Upper lobe of right lung (tissue), 1 donor: ENCODE measurements at regions of chr11 and their contacts with region 1.

Region 1: DNA sequence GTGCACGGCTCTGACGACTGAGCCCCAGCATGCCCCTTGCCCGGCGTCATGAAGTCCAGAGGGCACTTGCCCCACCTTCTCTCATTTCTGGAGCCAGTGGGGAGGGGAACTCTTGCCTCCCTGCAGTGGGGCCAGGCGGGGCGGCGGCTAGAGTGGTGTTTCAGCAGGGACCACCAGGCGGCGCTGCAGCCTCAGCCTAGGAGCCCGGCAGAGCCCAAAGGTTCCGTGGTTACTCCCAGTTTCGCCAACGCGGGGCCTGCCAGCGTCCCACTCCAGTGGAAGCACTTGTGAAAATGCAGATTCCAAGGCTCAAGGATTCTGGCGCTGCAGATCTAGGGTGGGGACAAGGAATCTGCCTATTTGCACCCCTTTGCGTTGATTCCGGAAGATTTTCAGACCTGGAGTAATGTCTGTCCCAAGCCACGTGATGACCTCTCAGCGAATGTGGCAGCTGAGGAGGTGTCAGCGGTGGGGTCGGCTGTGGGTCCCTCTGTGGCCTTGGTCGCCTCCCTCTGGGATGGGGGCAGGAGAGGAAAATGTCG is 55.7 kb downstream of the CD82 start:
- DNase-seq: peak; percentile 87
- ATAC-seq: peak; percentile 85
- H3K4me3 ChIP-seq: no peak overlapping the region
- H3K27ac ChIP-seq: no peak overlapping the region
- H3K4me1 ChIP-seq: peaks cover 15% of the 10 kb centered on the region
- H3K27me3 ChIP-seq: no peaks in the 10 kb centered on the region
- CTCF ChIP-seq: peak; percentile 97

Region 2: GRCh38 chr11:44464741-44465140 is 156.5 kb before region 1 on chr11:
- intact Hi-C with region 1: no loop called
- DNase-seq: no peak
- ATAC-seq: no peak
- H3K4me3 ChIP-seq: no peak overlapping the region
- H3K27ac ChIP-seq: no peak overlapping the region
- H3K4me1 ChIP-seq: no peaks in the 10 kb centered on the region
- H3K27me3 ChIP-seq: no peaks in the 10 kb centered on the region
- CTCF ChIP-seq: no peak

Region 3: DNA sequence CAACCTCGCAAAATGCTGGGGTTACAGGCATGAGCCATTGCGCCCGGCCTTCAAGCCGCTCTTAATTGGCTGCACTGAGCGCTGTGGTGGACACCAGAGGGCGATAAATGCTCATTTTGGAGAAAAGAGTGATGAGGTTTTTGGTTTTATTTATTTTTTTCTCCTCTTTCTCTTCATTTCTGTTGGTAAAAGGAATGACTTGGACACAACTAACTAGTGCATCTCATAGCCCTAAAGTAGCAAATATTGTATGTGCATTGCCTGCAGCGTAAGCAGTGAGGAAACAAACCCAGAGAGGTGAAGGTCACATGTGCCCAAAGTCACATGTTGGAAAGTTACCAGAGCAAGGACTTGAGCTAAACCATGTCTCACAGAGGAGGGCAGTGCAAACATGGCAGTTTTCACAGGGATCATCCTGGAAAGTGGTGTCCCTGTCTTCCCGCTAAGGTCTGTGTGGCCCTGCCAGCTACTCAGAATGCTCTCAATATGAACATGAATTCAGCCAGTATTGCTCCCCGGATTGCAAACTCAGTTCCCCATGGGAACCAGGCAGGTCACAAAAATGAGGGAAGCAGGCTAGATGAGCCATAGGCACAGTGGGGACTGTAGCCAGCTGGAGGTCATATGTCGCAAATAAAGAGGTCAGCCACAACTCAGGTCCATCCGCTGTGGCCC is 64.3 kb before region 1 on chr11:
- intact Hi-C with region 1: loop called (anchors 5 kb)
- DNase-seq: no peak
- ATAC-seq: peak; percentile 79
- H3K4me3 ChIP-seq: no peak overlapping the region
- H3K27ac ChIP-seq: no peak overlapping the region
- H3K4me1 ChIP-seq: peaks cover 13% of the 10 kb centered on the region
- H3K27me3 ChIP-seq: no peaks in the 10 kb centered on the region
- CTCF ChIP-seq: peak; percentile 76